ENCODE measurements at regions of chr1 and their contacts with region 1.

Region 1: DNA sequence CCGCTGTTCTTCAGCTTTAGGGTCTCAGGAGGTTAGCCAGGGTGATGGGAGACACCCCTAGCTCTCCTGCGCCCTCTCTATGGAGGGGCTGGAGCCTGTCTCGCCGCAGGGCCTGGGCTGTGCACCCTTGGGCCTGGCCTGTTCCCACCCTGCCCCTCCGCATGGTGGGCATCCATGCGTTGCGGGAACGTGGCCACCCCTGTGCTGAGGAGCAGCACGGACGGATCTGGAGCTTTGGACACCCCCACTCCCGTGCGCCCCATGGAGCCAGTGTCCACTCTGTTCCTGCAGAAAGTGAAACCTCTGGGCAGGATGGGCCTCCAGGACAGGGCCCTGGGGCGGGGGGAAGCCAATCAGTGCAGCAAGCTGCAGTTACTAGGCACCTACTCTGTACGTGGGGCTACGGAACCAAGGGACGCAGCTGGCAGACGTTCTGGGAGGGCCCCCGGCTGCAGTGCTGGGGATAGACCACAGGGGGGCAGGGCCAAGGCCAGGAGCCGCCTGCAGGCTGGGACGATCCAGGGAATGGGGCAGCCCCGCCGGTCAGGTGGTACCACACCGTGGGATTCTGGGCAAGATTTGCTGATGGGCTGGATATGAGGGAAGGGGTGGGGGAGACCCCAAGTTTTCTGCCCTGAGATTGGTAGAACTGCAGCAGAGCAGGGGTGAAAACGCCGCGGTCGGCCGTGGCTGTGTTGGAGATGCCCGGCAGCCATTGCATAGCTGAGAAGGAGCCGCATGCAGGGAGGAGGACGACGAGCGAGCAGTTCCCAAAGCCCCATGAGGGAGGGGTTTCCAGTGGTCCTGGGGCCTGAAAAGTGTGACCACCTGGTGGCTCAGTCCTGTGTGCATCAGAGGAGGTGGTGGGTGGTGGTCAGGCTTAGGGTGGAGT is 43.3 kb downstream of the TP73 start:
- DNase-seq: peak; percentile 42 to 77 (median 67)
- H3K4me3 ChIP-seq: no peak overlapping the region
- H3K27ac ChIP-seq: no peak overlapping the region
- H3K4me1 ChIP-seq: no peaks in the 10 kb centered on the region
- H3K27me3 ChIP-seq: no peaks in the 10 kb centered on the region
- CTCF ChIP-seq: peak; percentile 52 to 88 (median 82)
- POLR2A ChIP-seq: no peak

Region 2: GRCh38 chr1:3721955-3722465 is 26.4 kb after region 1 on chr1:
- intact Hi-C with region 1: loop called in 1 of 2 experiments (anchors 2 kb)
- DNase-seq: no peak
- H3K4me3 ChIP-seq: no peak overlapping the region
- H3K27ac ChIP-seq: no peak overlapping the region
- H3K4me1 ChIP-seq: no peaks in the 10 kb centered on the region
- H3K27me3 ChIP-seq: peaks cover 6% of the 10 kb centered on the region
- CTCF ChIP-seq: no peak
- POLR2A ChIP-seq: no peak